ENCODE measurements at regions of chr16 and their contacts with region 1.

Region 1: GRCh38 chr16:49921791-49922456 is 66.0 kb upstream of the ZNF423 start:
- DNase-seq: peak; percentile 63 to 87
- H3K4me3 ChIP-seq: no peak overlapping the region
- H3K27ac ChIP-seq: no peak overlapping the region
- H3K4me1 ChIP-seq: peaks cover 0 to 4% (median 1%) of the 10 kb centered on the region in 4 experiments; a peak in 5 of 7 replicates
- H3K27me3 ChIP-seq: no peaks in the 10 kb centered on the region; a peak in 1 of 7 replicates
- CTCF ChIP-seq: peak; percentile 76 to 95 (median 93)
- EP300 ChIP-seq: no peak; a peak in 1 of 3 replicates
- POLR2A ChIP-seq: no peak
- RAD21 ChIP-seq: peak; percentile 93 to 96

Region 2: DNA sequence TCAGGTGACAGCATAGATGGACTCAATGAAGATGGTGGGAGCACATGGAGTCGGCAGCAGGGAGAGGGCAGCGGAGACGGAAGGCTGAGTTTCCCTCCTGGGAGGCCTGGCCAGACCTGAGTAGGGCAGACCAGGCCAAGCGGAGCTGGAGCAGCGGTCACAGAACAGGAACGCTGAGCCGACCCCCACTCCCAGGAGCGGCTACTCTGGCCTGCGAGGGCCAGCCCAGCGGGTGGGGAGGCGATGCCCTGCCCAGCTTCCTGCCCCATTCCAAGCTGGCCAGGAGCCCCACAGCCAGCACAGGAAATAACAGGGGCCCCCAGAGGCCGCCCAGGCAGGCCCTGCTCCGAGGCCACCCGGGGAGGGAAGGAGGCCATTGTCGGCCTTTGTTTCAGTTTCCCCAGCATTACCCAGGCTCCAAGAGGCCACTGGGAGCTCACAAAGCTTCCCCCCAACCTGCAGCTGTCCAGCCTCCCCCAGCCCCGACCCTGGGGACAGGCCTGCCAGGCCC is 145.8 kb before region 1 on chr16:
- CTCF ChIA-PET with region 1: no interaction called
- POLR2A ChIA-PET with region 1: no interaction called
- DNase-seq: peak in 1 of 2 experiments; percentile 77
- H3K4me3 ChIP-seq: no peak overlapping the region
- H3K27ac ChIP-seq: no peak overlapping the region; the same call in 1 of the 2 replicates
- H3K4me1 ChIP-seq: peaks cover 15 to 35% (median 21%) of the 10 kb centered on the region in 4 experiments
- H3K27me3 ChIP-seq: no peaks in the 10 kb centered on the region
- CTCF ChIP-seq: no peak
- EP300 ChIP-seq: no peak
- POLR2A ChIP-seq: no peak
- RAD21 ChIP-seq: peak in 1 of 2 experiments; percentile 25; a peak in 1 of 4 replicates

Region 3: GRCh38 chr16:49795513-49795912 is 126.4 kb before region 1 on chr16:
- CTCF ChIA-PET with region 1: interaction called, 11 read pairs
- POLR2A ChIA-PET with region 1: no interaction called
- DNase-seq: no peak
- H3K4me3 ChIP-seq: no peak overlapping the region
- H3K27ac ChIP-seq: no peak overlapping the region
- H3K4me1 ChIP-seq: peaks cover 0 to 12% (median 3%) of the 10 kb centered on the region in 4 experiments; a peak in 6 of 7 replicates
- H3K27me3 ChIP-seq: no peaks in the 10 kb centered on the region
- CTCF ChIP-seq: no peak
- EP300 ChIP-seq: no peak
- POLR2A ChIP-seq: no peak
- RAD21 ChIP-seq: no peak

Region 4: DNA sequence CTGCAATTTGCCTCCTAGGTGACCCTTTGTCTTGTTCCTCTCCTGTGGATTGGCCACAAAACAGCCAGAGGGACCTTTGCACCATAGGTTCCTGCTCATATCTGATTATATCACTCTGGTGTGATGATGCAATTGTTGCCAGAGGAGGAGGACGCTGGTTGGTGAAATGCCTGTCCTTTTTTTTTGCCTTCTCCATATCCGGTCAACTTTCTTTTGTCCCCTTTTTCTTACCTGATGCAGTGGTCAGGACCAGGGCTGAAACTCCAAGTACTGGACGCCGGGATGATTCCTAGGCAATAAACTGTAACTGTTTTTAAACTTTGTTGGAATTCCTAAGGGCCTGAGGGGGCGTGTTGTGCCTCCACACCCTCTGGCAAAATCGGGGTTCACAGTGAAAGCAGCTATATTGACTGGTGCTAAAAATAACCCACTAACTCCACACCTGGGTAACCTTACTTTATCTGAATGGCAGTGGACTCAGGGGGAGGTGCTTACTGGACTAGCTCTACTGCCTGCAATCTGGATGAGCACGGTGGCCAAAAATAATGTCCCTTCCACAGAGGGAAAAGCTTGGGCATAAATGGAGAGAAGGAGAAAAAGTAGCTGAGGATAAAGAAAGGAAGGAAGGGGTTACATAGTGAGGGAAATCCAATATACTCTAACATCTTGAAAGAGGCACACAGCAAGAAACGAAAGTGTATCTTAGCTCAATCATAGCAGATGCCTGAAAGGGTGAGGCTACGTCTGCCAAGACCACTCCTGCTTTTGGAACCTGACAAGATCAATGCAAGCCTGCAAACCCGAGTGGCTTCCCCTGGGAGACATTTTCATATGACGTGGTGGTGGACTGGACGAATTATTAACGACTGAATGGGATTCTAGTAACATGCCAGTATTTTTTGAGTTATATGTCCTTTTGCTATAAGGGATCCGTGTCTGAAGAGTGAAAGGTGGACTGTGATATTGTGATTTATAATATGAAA is 37.6 kb before region 1 on chr16:
- CTCF ChIA-PET with region 1: interaction called, 17 read pairs
- POLR2A ChIA-PET with region 1: no interaction called
- DNase-seq: no peak
- H3K4me3 ChIP-seq: no peak overlapping the region
- H3K27ac ChIP-seq: no peak overlapping the region
- H3K4me1 ChIP-seq: peaks cover 0 to 13% (median 6%) of the 10 kb centered on the region in 4 experiments; a peak in 5 of 7 replicates
- H3K27me3 ChIP-seq: no peaks in the 10 kb centered on the region
- CTCF ChIP-seq: no peak
- EP300 ChIP-seq: no peak
- POLR2A ChIP-seq: no peak
- RAD21 ChIP-seq: no peak

Region 5: DNA sequence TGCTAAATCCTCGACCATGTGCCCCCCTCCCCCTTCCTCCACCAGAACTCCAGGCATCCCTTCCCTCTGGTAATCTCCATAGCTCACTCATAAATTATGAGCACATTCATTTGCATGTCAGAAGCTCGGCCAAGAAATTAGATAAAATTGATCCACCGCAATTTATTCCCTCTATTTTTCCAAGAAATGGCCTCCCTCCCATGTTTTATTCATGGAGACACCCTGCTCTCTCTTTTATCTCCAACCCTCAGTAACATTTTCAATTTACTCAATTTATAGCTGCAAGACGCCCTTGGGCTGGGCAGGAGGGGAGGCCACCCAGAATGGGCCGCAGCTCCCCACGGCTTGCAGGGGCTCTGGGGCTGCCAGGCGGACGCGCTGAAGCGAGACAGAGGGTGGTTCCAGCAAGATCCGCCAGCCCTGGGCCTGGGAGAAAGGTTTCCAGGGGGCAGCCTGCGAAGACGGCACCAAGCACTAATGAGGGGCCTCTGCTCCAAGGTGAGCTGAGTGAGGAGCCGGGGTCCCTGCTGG is 11.3 kb before region 1 on chr16:
- CTCF ChIA-PET with region 1: interaction called, 21 read pairs
- POLR2A ChIA-PET with region 1: no interaction called
- DNase-seq: peak in 1 of 2 experiments; percentile 49
- H3K4me3 ChIP-seq: no peak overlapping the region
- H3K27ac ChIP-seq: no peak overlapping the region
- H3K4me1 ChIP-seq: no peaks in the 10 kb centered on the region; a peak in 2 of 7 replicates
- H3K27me3 ChIP-seq: no peaks in the 10 kb centered on the region
- CTCF ChIP-seq: no peak
- EP300 ChIP-seq: no peak
- POLR2A ChIP-seq: no peak
- RAD21 ChIP-seq: no peak